Activated T-helper 1 cell treated with anti-CD3 and anti-CD28 coated beads, Interleukin-12 subunit alpha, Interleukin-12 subunit beta, Interleukin-2, Interleukin-4 antibody, amounts not matched to agents 30 ng/mL and 10 ng/mL and 1 ng/mL, durations not matched to agents 14 hours and 24 hours and 36 hours (primary cell): ENCODE measurements at regions of chr2 and their contacts with region 1.

Region 1: DNA sequence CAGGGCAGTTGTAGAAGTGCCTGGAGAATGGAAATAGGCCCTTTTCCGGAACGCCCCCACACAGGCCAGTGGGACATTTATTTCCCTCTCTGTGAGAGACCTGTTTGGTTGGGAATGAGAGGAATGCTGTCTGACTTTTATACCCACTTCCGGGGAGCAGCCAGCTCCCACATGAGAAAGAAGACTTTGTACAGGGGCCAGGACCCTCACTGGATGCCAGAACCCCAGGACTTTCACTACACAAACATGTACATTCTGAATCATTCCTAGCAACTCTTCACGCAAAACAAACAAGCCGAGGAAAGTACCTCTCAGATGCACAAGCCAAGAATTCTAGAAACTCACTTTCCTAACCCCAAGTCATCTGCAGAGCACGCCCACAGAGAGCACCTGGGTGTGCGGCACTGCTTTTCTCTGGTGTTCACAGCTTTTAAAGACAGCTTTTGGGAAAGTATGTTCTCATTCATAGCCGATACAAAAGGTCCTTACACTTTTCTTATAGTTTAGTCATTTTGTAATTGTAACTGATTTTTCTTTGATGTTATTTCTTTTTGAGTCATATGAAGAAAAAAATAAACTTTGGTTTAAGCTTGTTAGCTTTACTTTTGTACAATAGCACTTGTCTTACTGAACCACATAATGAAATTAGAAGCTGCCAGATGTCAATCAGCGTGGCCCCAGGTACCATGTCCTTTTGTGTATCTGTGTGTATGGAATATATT is 856.1 kb upstream of the ID2 start:
- DNase-seq: peak; percentile 55
- H3K4me3 Mint-ChIP-seq: peak overlapping the region; percentile 23
- H3K27ac Mint-ChIP-seq: peak overlapping the region; percentile 97
- H3K4me1 Mint-ChIP-seq: peaks cover 41% of the 10 kb centered on the region
- H3K27me3 Mint-ChIP-seq: peaks cover 4% of the 10 kb centered on the region

Region 2: GRCh38 chr2:7523481-7524120 is 302.2 kb before region 1 on chr2:
- intact Hi-C with region 1: loop called (anchors 5 kb)
- DNase-seq: no peak
- H3K4me3 Mint-ChIP-seq: peak overlapping the region; percentile 2
- H3K27ac Mint-ChIP-seq: peak overlapping the region; percentile 90
- H3K4me1 Mint-ChIP-seq: peaks cover 77% of the 10 kb centered on the region
- H3K27me3 Mint-ChIP-seq: no peaks in the 10 kb centered on the region

Region 3: DNA sequence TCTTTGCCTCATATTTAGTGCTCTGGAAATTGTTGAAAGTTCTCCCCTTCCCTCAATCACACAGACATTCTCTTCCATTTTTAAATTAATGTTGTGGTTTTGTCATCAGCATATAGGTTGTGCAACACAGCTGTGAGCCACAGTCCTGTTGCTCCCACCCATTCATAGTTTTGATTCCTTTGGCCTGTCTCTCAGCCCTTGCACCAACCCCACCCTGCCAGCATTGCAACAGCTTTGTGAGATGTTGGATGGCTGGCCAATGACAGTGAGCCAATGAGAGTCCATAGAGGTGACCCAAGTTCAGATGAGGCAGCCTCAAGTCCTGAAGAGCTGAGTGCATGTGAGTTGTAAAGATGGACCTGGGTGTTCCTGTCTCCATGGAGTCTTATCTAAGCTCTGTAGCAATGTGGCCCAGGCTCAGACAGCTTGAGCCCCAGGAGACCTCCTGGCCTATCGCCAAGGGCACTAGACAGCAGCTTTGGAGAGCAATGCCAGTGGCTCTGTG is 133.0 kb before region 1 on chr2:
- intact Hi-C with region 1: loop called (anchors 1 kb)
- DNase-seq: no peak
- H3K4me3 Mint-ChIP-seq: peak overlapping the region; percentile 48
- H3K27ac Mint-ChIP-seq: peak overlapping the region; percentile 94
- H3K4me1 Mint-ChIP-seq: peaks cover 51% of the 10 kb centered on the region
- H3K27me3 Mint-ChIP-seq: no peaks in the 10 kb centered on the region

Region 4: DNA sequence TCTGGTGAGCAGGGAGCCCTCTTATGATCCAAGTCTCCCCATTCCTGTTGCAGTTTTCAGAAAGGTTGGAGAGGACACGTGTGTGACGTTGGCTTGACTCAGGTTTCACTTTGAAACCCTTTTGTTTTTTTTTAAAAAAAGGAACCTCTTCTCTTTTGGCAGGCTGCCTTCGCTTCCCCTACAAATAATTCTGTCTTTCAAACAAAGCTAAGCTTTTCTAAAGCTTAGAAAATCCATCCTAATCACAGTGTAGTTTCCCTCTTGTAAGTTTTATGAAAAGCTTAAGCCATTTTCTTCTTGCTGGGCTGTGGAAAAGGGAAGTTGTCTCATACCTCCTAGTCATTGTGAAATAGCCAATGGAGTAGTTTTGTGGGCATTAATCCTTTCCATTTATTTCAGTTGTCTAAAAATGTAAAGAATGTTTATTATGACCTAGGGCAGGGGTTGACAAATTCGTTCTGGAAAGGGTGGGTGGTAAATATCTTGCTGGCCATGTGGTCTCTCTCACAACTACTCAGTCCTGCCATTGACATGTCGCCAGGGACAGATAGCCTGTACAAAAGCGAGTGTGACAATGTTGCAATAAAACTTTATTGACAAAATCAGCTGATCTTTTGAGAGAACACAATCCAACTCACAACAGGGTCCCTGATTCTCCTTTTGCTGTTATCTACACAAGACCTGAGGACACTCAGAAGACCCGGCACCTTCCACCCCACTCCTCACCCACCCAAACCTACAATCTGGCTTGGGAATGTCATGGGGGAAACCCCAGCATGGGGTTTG is 29.8 kb before region 1 on chr2:
- intact Hi-C with region 1: no loop called
- DNase-seq: no peak
- H3K4me3 Mint-ChIP-seq: no peak overlapping the region
- H3K27ac Mint-ChIP-seq: peak overlapping the region; percentile 57
- H3K4me1 Mint-ChIP-seq: peaks cover 14% of the 10 kb centered on the region
- H3K27me3 Mint-ChIP-seq: no peaks in the 10 kb centered on the region

Region 5: DNA sequence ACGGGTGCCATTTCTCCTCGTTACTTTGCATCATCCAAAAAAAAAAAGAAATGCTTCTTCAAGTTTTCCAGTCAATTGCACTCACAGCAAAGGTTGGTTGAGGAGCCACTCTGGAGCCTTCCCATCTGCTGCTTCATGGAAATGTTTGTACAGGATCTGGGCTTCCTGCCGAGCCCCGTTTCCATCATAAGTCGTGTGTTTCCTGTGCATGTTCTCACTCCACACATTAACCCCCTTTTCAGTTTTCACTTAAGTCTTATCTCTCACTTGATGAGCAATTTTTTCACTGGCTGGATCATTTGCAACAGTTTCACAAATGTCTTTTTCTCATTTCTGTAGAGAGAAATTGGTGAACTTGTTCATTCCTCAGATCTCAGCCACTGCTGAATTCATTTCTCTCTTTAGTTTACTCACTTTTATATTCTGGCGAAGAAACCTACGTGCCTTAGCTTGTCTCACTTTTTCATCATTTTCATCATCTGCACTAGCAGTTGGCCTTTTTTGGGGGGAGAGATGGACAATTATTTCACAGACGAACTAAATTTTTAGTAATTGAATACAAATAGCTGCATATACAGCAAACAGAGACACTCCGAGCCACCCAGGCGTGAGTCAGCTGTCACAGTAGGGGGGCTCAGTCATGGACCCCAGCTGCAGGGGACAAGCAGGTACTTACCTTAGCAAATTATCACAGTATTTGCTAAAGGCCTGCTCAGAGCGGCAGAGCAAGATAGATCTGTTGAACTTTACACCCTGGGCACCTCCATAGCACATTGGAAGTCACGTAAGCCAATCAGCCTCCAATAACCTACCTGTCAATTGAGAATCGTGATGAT is 105.3 kb after region 1 on chr2:
- intact Hi-C with region 1: loop called (anchors 1 kb)
- DNase-seq: no peak
- H3K4me3 Mint-ChIP-seq: no peak overlapping the region
- H3K27ac Mint-ChIP-seq: peak overlapping the region; percentile 81
- H3K4me1 Mint-ChIP-seq: peaks cover 11% of the 10 kb centered on the region
- H3K27me3 Mint-ChIP-seq: no peaks in the 10 kb centered on the region

Region 6: DNA sequence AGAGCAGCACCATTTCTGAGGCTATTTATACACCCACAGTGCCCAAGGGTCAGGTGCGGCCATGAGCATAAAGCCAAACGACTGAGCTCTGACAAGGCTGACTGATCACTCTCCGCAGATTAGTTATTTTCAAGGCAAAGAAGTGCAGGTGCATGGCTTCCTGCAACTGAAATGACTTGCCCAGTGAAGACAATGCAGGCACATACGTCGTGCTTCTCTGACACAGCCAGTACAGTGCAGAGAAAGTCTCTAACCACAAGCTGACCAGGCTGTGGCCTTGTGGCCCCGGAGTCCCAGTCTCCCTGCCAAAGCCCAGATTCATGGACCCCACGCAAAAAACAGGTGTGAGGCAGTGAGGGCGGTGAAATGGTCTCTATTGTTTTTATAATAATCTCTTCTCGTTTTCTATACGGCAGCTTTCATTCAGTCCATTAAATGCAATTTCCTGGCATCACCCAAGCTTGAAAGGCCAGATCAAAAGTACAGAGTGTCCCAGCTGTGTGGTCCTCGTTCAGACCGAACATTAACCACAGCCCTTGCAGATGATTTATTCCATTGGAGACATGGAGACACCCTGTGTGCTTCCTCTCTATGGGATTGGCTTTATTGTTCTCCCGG is 409.1 kb after region 1 on chr2:
- intact Hi-C with region 1: loop called (anchors 1 kb)
- DNase-seq: no peak
- H3K4me3 Mint-ChIP-seq: no peak overlapping the region
- H3K27ac Mint-ChIP-seq: no peak overlapping the region
- H3K4me1 Mint-ChIP-seq: peaks cover 53% of the 10 kb centered on the region
- H3K27me3 Mint-ChIP-seq: peaks cover 9% of the 10 kb centered on the region

Region 7: DNA sequence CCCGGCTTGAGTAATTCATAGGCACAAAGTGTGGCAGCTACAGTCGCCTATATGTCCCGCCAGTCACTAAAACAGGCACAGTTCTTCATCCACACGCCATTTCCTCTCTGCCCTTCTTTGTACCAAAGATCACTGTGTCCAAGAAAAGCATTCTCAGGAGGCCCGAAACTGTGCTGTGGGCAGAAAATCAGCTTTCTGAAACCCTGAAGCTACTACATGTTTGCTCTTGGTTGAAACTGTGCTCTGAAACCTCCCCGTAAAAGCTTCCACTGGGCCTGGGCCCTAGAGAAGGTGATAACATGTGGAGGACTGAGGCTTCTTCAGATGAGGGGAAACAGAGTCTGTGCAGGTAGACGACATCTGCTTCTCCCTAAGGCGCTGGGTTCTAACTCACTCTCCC is 780.5 kb after region 1 on chr2:
- intact Hi-C with region 1: loop called (anchors 5 kb)
- DNase-seq: no peak
- H3K4me3 Mint-ChIP-seq: no peak overlapping the region
- H3K27ac Mint-ChIP-seq: no peak overlapping the region
- H3K4me1 Mint-ChIP-seq: peaks cover 44% of the 10 kb centered on the region
- H3K27me3 Mint-ChIP-seq: peaks cover 1% of the 10 kb centered on the region